IMR-90 (cell line): ENCODE measurements at regions of chr10 and their contacts with region 1.

Region 1: DNA sequence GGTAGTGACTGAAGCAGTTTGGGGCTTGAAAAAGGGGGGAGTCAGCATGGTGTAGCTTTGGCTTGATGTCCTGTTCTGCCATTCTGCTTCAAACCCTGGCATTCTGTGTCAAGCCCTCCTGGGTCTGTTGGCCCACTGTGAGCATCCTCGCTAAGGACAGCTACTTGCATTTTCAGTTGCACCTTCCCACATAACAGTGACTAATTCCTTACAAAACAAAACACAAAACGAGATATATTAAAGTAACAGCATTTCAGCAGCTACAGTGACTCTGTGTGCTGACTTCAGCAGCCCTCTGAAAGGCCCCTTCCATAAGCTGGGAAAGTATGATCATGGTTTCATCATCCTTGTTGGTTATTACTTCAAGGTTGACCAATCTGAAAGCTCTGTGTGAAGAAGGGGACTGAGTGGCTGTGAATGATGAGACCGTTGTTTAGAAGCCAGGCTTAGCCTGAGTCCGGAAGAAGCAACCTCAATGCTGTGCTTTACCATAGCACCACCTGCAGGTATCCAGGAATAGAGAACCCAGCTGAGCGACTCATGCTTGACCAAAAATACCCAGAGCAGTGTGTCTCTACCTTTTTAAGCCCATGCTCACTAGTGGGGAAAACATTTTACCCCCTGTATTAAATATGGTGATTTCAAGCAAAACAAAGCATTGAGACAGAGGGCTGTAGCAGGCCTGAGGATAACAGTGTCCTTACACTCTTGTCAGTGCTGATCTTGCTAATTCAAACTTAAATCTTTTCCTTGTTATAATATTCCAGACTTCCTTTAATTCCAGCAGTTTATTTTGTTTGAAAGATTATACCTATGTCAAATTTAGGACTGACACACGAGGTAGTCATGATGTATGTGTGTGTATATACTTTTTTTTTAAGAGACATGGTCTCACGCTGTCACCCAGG is 42.6 kb upstream of the CC2D2B start:
- DNase-seq: peak; percentile 86
- ATAC-seq: peak; percentile 99
- H3K4me3 ChIP-seq: no peak overlapping the region
- H3K27ac ChIP-seq: peak overlapping the region; percentile 44; the same call in 1 of the 2 replicates
- H3K4me1 ChIP-seq: peaks cover 2% of the 10 kb centered on the region; the same call in 1 of the 2 replicates
- H3K27me3 ChIP-seq: no peaks in the 10 kb centered on the region
- CTCF ChIP-seq: peak; percentile 84
- POLR2A ChIP-seq: no peak
- RAD21 ChIP-seq: peak; percentile 78

Region 2: DNA sequence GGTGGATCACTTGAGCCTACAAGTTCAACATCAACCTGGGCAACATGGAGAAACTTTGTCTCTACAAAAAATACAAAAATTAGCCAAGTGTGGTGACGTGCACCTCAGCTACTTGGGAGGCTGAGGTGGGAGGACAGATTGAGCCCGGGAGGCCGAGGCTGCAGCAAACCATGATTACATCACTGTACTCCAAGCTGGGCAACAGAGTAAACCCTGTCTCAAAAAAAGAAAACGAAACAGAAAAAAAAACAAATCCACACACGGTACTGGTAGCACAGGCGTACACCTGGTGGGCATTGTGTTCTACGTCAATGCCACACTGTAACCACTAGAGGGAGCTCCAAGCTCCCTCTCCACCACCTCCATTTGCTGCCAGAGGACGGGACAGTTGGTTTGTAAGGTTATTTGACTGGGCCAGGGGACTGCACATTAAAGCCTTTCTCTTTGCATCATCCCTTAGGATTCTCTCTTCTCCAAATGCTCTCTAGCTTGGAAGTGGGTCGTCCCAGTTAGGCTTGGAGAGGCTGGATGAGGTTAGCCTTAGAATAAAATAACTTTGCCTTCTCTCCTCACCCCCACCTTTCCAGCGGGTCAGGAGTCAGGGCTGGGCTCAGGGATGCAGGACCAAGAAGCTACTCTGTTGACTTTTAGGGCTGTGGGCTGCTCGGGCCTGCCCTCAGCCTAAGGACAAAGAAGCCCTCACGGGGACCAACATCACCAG is 434.8 kb before region 1 on chr10:
- CTCF ChIA-PET with region 1: no interaction called
- POLR2A ChIA-PET with region 1: no interaction called
- dilution Hi-C with region 1: no loop called
- in situ Hi-C with region 1: no loop called
- intact Hi-C with region 1: loop called (anchors 10 kb)
- DNase-seq: peak; percentile 44
- ATAC-seq: peak; percentile 91
- H3K4me3 ChIP-seq: no peak overlapping the region
- H3K27ac ChIP-seq: no peak overlapping the region
- H3K4me1 ChIP-seq: no peaks in the 10 kb centered on the region
- H3K27me3 ChIP-seq: peaks cover 15% of the 10 kb centered on the region
- CTCF ChIP-seq: peak; percentile 90
- POLR2A ChIP-seq: no peak
- RAD21 ChIP-seq: peak; percentile 87

Region 3: GRCh38 chr10:95841661-95842498 is 23.3 kb before region 1 on chr10:
- CTCF ChIA-PET with region 1: interaction called, 18 read pairs
- POLR2A ChIA-PET with region 1: no interaction called
- dilution Hi-C with region 1: no loop called
- in situ Hi-C with region 1: no loop called
- intact Hi-C with region 1: loop called (anchors 1 kb)
- DNase-seq: peak; percentile 66
- ATAC-seq: peak; percentile 91
- H3K4me3 ChIP-seq: no peak overlapping the region
- H3K27ac ChIP-seq: no peak overlapping the region
- H3K4me1 ChIP-seq: peaks cover 3% of the 10 kb centered on the region; the same call in 1 of the 2 replicates
- H3K27me3 ChIP-seq: no peaks in the 10 kb centered on the region
- CTCF ChIP-seq: peak; percentile 80
- POLR2A ChIP-seq: no peak
- RAD21 ChIP-seq: peak; percentile 73

Region 4: DNA sequence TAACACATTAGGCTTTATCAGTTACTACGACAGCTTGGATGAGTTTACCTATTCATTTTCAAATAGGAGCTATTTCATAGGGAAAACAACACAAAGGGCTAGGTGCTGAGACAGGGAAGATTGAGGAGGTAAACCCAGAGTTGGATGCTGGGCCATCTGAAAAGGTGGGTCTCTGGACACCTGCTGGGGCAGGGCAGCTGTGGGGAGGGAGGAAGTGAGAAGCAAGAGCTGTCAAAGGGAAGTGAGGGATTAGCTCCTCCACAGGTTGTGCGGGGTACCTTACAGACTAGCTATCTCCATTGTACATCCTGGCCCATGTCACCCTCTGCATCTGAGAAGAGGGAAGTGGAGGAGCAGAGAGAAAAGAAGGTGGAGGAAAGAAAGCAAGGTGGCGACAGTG is 357.3 kb after region 1 on chr10:
- CTCF ChIA-PET with region 1: no interaction called
- POLR2A ChIA-PET with region 1: no interaction called
- dilution Hi-C with region 1: no loop called
- in situ Hi-C with region 1: no loop called
- intact Hi-C with region 1: no loop called
- DNase-seq: no peak
- ATAC-seq: no peak
- H3K4me3 ChIP-seq: no peak overlapping the region
- H3K27ac ChIP-seq: no peak overlapping the region
- H3K4me1 ChIP-seq: no peaks in the 10 kb centered on the region
- H3K27me3 ChIP-seq: no peaks in the 10 kb centered on the region; the same call in 1 of the 2 replicates
- CTCF ChIP-seq: no peak
- POLR2A ChIP-seq: no peak
- RAD21 ChIP-seq: no peak